ENCODE measurements at regions of chr7 and their contacts with region 1.

Region 1: GRCh38 chr7:106736508-106737201 is 75.7 kb upstream of the CCDC71L start:
- DNase-seq: peak in 3 of 6 donors; percentile 25 to 51 (median 37)
- ATAC-seq: peak; percentile 95 to 99 (median 98)
- H3K4me3 ChIP-seq: no peak overlapping the region
- H3K27ac ChIP-seq: peak overlapping the region in 1 of 4 donors; percentile 38
- H3K4me1 ChIP-seq: peaks cover 0 to 2% (median 0%) of the 10 kb centered on the region in 3 donors
- H3K27me3 ChIP-seq: no peaks in the 10 kb centered on the region
- CTCF ChIP-seq: peak; percentile 14 to 53 (median 40)

Region 2: DNA sequence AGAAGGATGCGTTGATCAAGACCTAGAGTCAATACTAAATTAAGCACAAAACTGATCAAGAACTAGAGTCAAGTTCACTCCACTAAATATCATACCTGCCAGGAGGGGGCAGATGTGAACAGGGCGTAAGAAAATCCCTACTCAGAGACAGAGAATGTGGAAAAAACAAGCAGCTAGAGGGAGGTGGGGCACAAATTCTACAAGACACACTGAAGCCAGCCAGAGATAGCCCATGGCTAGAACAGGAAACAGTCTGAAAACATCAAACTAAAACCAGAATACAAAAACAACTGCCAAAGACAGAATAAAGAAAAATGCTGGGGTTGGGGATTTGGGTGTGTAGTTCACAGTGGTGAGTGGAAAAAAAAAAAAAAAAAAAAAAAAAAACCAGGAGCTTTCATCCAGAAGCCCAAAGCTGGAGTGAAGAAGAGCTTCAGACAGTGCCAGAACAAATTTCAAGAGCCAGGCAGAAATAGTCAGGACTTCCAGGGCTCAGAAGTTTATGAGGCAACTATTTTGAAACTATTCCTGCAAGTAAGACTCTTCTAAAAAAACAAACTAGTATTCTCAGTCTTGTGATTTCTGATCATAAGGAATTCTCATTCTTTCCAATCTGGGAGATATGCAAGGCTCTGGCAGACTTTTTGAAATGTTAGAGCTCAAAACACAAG is 194.0 kb before region 1 on chr7:
- intact Hi-C with region 1: loop called in 1 of 3 experiments (anchors 10 kb)
- DNase-seq: peak in 3 of 6 donors; percentile 34 to 62 (median 43)
- ATAC-seq: peak; percentile 92 to 99 (median 96)
- H3K4me3 ChIP-seq: no peak overlapping the region
- H3K27ac ChIP-seq: peak overlapping the region in 1 of 4 donors; percentile 4
- H3K4me1 ChIP-seq: peaks cover 0 to 4% (median 0%) of the 10 kb centered on the region in 3 donors
- H3K27me3 ChIP-seq: no peaks in the 10 kb centered on the region
- CTCF ChIP-seq: peak; percentile 33 to 44 (median 36)

Region 3: GRCh38 chr7:107180378-107180777 is 443.7 kb after region 1 on chr7:
- intact Hi-C with region 1: no loop called
- DNase-seq: peak in 5 of 6 donors; percentile 23 to 65 (median 52)
- ATAC-seq: peak; percentile 51 to 86 (median 76)
- H3K4me3 ChIP-seq: no peak overlapping the region
- H3K27ac ChIP-seq: peak overlapping the region in 1 of 4 donors; percentile 20
- H3K4me1 ChIP-seq: peaks cover 5 to 12% (median 9%) of the 10 kb centered on the region in 3 donors
- H3K27me3 ChIP-seq: no peaks in the 10 kb centered on the region
- CTCF ChIP-seq: no peak